H1 (cell line): ENCODE measurements at regions of chrX and their contacts with region 1.

Region 1: DNA sequence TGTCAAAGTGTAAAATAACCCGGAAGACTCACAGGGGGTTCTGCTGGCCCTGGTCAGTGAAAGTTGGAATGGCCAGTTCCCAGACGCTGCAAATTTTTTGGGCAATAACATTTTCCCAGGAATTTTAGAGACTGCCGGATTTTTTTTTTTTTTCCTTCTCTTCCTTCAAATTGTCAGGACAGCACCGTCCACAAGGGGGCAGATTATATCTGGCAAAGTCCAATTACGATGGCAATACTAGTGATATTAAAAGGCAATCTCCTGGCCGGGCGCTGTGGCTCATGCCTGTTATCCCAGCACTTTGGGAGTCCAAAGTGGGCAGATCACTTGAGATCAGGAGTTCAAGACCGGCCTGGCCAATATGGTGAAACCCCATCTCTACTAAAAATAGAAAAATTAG is 20.5 kb downstream of the SLC25A5 start:
- DNase-seq: peak in 1 of 2 experiments; percentile 56
- H3K4me3 ChIP-seq: no peak overlapping the region
- H3K27ac ChIP-seq: no peak overlapping the region
- H3K4me1 ChIP-seq: no peaks in the 10 kb centered on the region
- H3K27me3 ChIP-seq: no peaks in the 10 kb centered on the region
- CTCF ChIP-seq: peak in 2 of 3 experiments; percentile 39 to 46; a peak in 3 of 4 replicates
- EP300 ChIP-seq: no peak
- POLR2A ChIP-seq: no peak
- RAD21 ChIP-seq: peak; percentile 29 to 53; a peak in 3 of 4 replicates

Region 2: DNA sequence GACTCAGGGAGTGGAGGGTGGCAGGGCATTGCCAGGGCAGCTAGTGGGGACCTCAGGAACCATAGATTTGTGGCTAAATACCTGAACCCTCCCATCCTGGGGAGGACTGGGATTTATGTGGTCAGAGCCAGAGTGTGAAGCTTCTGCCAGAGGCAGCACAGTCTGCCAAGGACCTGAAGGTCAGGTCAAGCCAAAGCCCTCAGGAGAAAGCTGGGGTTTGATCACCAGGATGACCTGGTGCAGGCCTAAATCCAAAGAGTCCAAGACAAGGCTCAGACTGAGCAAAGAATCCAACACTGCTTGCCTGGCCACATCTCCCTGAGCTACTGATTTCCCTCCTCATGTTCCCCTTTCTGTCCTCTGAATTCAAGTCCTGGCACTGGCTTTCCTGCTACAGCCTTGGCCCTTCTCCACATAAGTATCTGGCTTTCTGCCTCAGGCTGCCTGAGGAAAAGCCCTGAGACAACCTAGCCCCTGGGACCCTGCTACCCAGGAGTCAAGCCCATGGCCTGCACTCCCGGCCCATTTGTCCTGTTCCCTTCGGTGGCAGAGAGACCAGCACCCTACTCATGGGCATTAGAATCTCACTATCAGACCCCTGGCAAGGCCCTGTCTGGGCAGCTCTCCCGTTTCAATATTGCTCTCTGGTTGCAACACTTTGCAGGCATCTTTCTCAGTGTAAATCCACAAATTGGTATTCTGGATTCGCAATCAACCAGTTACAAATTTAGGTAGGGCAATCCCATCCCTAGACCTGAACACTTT is 128.9 kb before region 1 on chrX:
- CTCF ChIA-PET with region 1: no interaction called
- POLR2A ChIA-PET with region 1: no interaction called
- DNase-seq: no peak
- H3K4me3 ChIP-seq: no peak overlapping the region
- H3K27ac ChIP-seq: no peak overlapping the region
- H3K4me1 ChIP-seq: no peaks in the 10 kb centered on the region
- H3K27me3 ChIP-seq: no peaks in the 10 kb centered on the region
- CTCF ChIP-seq: no peak
- EP300 ChIP-seq: no peak
- POLR2A ChIP-seq: no peak
- RAD21 ChIP-seq: no peak

Region 3: GRCh38 chrX:119502727-119503483 is 14.2 kb after region 1 on chrX:
- CTCF ChIA-PET with region 1: interaction called, 11 read pairs
- POLR2A ChIA-PET with region 1: no interaction called
- DNase-seq: no peak
- H3K4me3 ChIP-seq: no peak overlapping the region
- H3K27ac ChIP-seq: no peak overlapping the region
- H3K4me1 ChIP-seq: peaks cover 0 to 2% (median 0%) of the 10 kb centered on the region in 4 experiments; a peak in 1 of 7 replicates
- H3K27me3 ChIP-seq: no peaks in the 10 kb centered on the region
- CTCF ChIP-seq: no peak
- EP300 ChIP-seq: no peak
- POLR2A ChIP-seq: no peak
- RAD21 ChIP-seq: no peak